ENCODE measurements at regions of chr17 and their contacts with region 1.

Region 1: DNA sequence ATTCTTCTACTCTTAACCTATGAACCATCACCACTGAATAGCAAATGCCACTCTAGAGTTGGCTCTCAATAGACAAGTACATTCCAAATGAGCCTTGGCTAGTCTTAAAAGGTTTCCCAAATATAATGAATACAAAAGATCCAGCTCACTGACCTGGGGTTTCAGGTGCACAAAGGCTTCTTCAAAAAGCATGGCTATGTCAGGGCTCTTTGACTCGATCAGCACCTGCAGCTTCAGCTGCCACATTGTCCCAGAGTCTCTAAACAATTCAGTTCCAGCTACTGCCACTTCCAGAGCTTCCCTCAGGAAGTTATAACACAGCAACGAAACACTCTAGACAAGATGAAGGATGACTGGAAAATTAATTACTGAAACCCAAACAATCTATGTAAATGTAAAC is 16.0 kb upstream of the COPRS start:
- DNase-seq: no peak
- ATAC-seq: no peak
- H3K4me3 ChIP-seq: no peak overlapping the region
- H3K27ac ChIP-seq: no peak overlapping the region
- H3K4me1 ChIP-seq: no peaks in the 10 kb centered on the region
- H3K27me3 ChIP-seq: no peaks in the 10 kb centered on the region
- CTCF ChIP-seq: no peak
- EP300 ChIP-seq: no peak
- POLR2A ChIP-seq: no peak
- RAD21 ChIP-seq: no peak

Region 2: GRCh38 chr17:31286587-31286986 is 588.5 kb before region 1 on chr17:
- CTCF ChIA-PET with region 1: no interaction called
- POLR2A ChIA-PET with region 1: no interaction called
- in situ Hi-C with region 1: no loop called
- intact Hi-C with region 1: no loop called
- DNase-seq: no peak
- ATAC-seq: no peak
- H3K4me3 ChIP-seq: no peak overlapping the region
- H3K27ac ChIP-seq: no peak overlapping the region
- H3K4me1 ChIP-seq: no peaks in the 10 kb centered on the region
- H3K27me3 ChIP-seq: no peaks in the 10 kb centered on the region
- CTCF ChIP-seq: no peak
- EP300 ChIP-seq: no peak
- POLR2A ChIP-seq: no peak
- RAD21 ChIP-seq: no peak

Region 3: DNA sequence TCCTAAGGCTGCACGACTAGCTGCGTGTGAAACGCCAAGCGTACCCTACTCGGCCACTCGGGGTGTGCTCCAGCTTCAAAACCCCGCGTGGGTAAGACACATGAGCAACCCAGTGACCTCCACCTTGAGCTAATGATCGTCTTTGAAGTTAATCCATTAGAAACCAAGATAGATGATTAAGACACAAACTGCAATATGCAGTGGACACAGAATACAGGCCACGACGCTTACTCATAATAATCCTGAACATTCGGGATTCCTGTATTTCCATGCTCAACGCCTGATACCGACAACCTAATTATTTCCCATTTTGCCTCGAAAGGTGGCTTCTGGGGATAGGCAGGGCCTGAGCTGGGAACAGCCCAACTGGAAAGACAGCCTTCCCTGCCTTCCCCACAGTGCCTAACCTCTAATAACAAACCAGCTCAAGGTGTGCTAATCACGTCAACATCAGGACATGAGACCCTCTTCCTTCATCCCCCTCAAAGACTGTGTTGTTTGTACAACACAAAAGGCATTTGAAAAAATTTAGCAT is 15.5 kb before region 1 on chr17:
- CTCF ChIA-PET with region 1: no interaction called
- POLR2A ChIA-PET with region 1: interaction called, 10 read pairs
- in situ Hi-C with region 1: no loop called
- intact Hi-C with region 1: no loop called
- DNase-seq: no peak
- ATAC-seq: no peak
- H3K4me3 ChIP-seq: peak overlapping the region; percentile 68
- H3K27ac ChIP-seq: no peak overlapping the region
- H3K4me1 ChIP-seq: peaks cover 18 to 20% of the 10 kb centered on the region in 2 experiments
- H3K27me3 ChIP-seq: no peaks in the 10 kb centered on the region
- CTCF ChIP-seq: no peak
- EP300 ChIP-seq: no peak
- POLR2A ChIP-seq: no peak
- RAD21 ChIP-seq: no peak

Region 4: GRCh38 chr17:31888124-31888523 is 13.0 kb after region 1 on chr17:
- CTCF ChIA-PET with region 1: no interaction called
- POLR2A ChIA-PET with region 1: interaction called, 15 read pairs
- in situ Hi-C with region 1: no loop called
- intact Hi-C with region 1: no loop called
- DNase-seq: no peak
- ATAC-seq: no peak
- H3K4me3 ChIP-seq: no peak overlapping the region
- H3K27ac ChIP-seq: no peak overlapping the region
- H3K4me1 ChIP-seq: no peaks in the 10 kb centered on the region
- H3K27me3 ChIP-seq: no peaks in the 10 kb centered on the region
- CTCF ChIP-seq: no peak
- EP300 ChIP-seq: no peak
- POLR2A ChIP-seq: no peak
- RAD21 ChIP-seq: no peak

Region 5: GRCh38 chr17:31915456-31916100 is 40.5 kb after region 1 on chr17:
- CTCF ChIA-PET with region 1: no interaction called
- POLR2A ChIA-PET with region 1: no interaction called
- in situ Hi-C with region 1: no loop called
- intact Hi-C with region 1: no loop called
- DNase-seq: no peak
- ATAC-seq: no peak
- H3K4me3 ChIP-seq: no peak overlapping the region
- H3K27ac ChIP-seq: no peak overlapping the region
- H3K4me1 ChIP-seq: no peaks in the 10 kb centered on the region; a peak in 1 of 5 replicates
- H3K27me3 ChIP-seq: no peaks in the 10 kb centered on the region
- CTCF ChIP-seq: no peak
- EP300 ChIP-seq: no peak
- POLR2A ChIP-seq: no peak
- RAD21 ChIP-seq: no peak

Region 6: DNA sequence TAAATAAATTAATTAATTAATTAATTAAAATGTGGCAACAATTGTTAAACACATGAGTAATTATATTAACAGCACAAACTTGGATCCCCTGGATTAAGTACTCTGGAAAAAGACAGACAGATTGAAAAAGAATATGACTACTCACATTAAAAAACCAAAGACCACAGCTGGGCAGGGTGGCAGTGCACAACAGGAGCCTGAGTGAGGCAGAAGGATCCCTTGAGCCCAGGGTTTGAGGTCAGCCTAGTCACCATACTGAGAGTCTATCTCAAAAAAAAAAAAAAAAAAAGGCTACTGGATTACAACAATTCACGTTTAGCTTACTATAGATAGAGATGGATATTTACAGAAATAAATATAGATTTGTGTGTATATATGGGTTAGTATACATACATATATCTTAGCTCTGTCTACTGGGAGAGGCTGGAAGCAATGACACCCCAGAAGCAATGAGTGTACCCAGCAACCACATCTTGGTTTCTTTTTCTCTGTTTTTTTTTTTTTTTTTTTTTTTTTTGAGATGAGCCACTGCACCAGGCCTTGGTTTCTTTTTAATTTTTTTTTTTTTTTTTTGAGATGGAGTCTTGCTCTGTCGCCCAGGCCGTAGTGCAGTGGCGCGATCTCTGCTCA is 51.1 kb after region 1 on chr17:
- CTCF ChIA-PET with region 1: no interaction called
- POLR2A ChIA-PET with region 1: no interaction called
- in situ Hi-C with region 1: no loop called
- intact Hi-C with region 1: no loop called
- DNase-seq: no peak
- ATAC-seq: no peak
- H3K4me3 ChIP-seq: no peak overlapping the region
- H3K27ac ChIP-seq: no peak overlapping the region
- H3K4me1 ChIP-seq: peaks cover 0 to 4% of the 10 kb centered on the region in 2 experiments; a peak in 2 of 5 replicates
- H3K27me3 ChIP-seq: no peaks in the 10 kb centered on the region
- CTCF ChIP-seq: no peak
- EP300 ChIP-seq: no peak
- POLR2A ChIP-seq: no peak
- RAD21 ChIP-seq: no peak

Measured in K562 (cell line).